OCI-LY7 (cell line): ENCODE measurements at regions of chr1 and their contacts with region 1.

Region 1: GRCh38 chr1:66478116-66478515 is 55.8 kb upstream of the SGIP1 start:
- DNase-seq: no peak
- H3K4me3 ChIP-seq: no peak overlapping the region
- H3K27ac ChIP-seq: no peak overlapping the region
- H3K4me1 ChIP-seq: no peaks in the 10 kb centered on the region
- CTCF ChIP-seq: no peak

Region 2: DNA sequence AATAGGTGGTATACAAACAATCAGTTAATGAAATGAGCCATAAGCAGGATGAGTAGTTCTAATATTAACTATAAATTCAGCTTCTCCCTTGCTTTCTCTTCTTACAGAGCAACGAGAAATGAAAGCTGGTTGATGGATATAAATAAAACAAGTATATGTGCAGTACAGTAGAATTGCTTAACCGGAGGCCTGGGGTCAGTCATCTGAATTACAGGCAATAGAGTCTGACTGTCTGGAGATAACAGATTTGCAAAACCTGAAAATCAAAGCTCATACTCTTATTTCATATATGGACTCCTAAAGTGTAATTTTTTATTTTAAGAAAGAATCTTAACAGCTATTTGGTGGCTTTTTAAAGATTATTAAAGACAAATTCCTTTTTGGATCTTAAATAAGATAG is 12.7 kb after region 1 on chr1:
- CTCF ChIA-PET with region 1: no interaction called
- POLR2A ChIA-PET with region 1: interaction called, 3 read pairs
- intact Hi-C with region 1: loop called (anchors 1 kb)
- DNase-seq: no peak
- H3K4me3 ChIP-seq: no peak overlapping the region
- H3K27ac ChIP-seq: no peak overlapping the region
- H3K4me1 ChIP-seq: no peaks in the 10 kb centered on the region
- CTCF ChIP-seq: no peak

Region 3: DNA sequence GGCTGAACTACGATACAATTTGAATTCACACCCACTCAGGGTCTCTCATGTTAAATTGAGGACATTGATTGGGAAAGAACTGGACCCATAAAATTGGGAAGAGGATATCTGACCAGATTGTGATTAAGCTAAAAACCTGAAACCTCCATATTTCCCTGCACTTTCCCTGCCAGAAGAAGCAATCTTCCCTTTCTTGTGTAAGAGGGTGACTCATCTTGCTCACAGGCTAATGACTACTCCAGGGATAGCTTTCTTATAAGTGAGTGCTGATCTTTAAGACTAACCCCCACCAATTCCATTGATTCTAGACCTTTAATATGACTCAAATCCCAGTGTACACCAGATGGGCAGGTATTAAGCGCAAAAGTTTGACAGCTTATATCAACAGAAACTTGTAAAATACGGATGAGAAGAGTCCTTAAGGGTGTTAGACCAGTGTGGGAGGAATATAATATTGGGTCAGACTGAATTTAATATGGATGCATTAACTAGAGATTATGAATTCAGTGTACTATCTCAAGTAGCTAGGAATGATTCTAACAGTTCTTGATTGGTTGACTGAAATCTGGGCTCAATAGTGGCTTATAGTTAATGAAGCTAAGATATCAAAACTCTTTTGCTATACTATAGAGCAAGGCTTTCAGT is 43.7 kb after region 1 on chr1:
- CTCF ChIA-PET with region 1: no interaction called
- POLR2A ChIA-PET with region 1: no interaction called
- intact Hi-C with region 1: no loop called
- DNase-seq: no peak
- H3K4me3 ChIP-seq: no peak overlapping the region
- H3K27ac ChIP-seq: no peak overlapping the region
- H3K4me1 ChIP-seq: no peaks in the 10 kb centered on the region
- CTCF ChIP-seq: no peak

Region 4: DNA sequence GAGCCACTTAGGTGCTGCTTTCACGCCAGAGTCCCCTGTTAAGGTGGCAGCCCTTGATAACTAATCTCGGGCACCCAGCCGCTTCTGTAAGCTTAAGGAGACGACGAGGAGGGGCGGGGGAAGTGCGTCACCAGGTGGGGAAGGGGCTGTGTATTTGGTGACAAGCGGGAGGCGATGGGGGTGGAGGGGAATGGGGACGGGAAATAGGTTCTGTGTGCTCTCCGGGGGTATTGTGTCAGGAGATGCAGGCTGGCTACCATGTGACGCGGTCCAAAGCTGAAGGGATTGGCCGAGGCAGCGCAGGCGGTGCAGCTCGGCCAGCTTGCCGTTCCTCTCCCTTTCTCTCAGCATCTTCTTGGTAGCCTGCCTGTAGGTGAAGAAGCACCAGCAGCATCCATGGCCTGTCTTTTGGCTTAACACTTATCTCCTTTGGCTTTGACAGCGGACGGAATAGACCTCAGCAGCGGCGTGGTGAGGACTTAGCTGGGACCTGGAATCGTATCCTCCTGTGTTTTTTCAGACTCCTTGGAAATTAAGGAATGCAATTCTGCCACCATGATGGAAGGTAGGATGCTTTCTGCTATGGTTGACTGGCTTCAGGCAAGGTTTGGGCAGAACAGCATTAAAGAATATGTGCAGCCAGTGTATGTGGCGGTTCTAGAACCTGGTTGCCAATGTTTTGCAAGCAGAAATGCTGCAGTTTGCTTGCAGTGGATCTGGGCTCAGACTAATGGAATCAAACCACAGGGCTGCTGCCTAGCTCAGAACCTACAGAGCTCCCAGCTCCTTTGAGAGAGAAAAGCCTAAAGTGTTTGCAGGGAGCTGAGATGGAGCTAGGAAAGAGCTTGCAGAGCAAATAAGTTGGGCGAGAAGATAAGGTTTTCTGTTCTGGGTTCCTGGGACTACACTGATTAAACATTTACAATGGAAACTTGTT is 56.0 kb after region 1 on chr1 and contains the start of gene SGIP1:
- CTCF ChIA-PET with region 1: no interaction called
- POLR2A ChIA-PET with region 1: no interaction called
- intact Hi-C with region 1: no loop called
- DNase-seq: no peak
- H3K4me3 ChIP-seq: no peak within 1 kb of the TSS
- H3K27ac ChIP-seq: no peak within 1 kb of the TSS
- H3K4me1 ChIP-seq: no peaks in the 10 kb centered on the region
- CTCF ChIP-seq: no peak
- total RNA-seq, gene SGIP1: not detected in 2 replicates